ENCODE measurements at regions of chr4 and their contacts with region 1.

Region 1: DNA sequence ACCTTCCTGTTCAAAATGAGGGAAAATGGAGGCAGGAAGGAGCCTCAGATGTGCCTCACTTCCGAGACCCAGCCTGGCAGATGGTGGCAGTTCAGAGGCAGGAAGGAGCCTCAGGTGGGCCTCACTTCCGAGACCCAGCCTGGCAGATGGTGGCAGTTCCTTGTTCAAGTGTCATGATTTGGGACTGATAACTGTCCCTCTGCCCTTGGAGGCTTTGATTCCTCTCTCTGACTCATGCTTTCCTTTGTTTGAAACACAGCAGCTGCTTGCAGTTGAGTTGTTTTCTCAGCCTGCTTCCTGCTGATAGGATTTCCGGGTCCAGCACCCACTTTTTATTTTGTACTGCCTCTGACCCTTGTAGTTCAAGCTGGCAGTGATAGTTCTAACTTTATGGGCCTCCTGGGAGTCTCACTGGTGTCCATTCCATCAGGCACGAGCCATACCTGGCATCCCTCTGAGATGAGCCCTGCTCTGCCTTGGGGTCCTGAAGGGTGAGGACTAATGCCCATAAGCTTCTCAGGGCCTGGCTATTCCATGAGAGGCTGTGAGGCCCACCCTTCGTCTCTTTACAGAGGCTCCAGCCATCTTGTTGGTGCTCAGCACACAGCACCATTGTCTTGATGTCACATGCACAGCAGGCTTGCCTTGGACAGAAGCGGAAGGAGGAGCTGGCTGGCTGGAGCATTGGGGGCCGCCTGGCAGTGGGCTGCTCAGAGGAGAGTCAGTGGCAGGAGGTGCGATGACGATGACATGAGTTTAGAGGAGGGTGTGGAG is 13.0 kb downstream of the RGS12 start:
- DNase-seq: no peak
- H3K4me3 ChIP-seq: no peak overlapping the region
- H3K27ac ChIP-seq: no peak overlapping the region
- H3K4me1 ChIP-seq: peaks cover under 1% of the 10 kb centered on the region
- H3K27me3 ChIP-seq: no peaks in the 10 kb centered on the region
- CTCF ChIP-seq: no peak

Region 2: GRCh38 chr4:3241898-3242524 is 63.8 kb before region 1 on chr4:
- CTCF ChIA-PET with region 1: no interaction called
- dilution Hi-C with region 1: loop called (anchors 5 kb)
- in situ Hi-C with region 1: no loop called
- intact Hi-C with region 1: no loop called
- DNase-seq: no peak
- H3K4me3 ChIP-seq: no peak overlapping the region
- H3K27ac ChIP-seq: no peak overlapping the region
- H3K4me1 ChIP-seq: no peaks in the 10 kb centered on the region
- H3K27me3 ChIP-seq: no peaks in the 10 kb centered on the region
- CTCF ChIP-seq: no peak

Region 3: DNA sequence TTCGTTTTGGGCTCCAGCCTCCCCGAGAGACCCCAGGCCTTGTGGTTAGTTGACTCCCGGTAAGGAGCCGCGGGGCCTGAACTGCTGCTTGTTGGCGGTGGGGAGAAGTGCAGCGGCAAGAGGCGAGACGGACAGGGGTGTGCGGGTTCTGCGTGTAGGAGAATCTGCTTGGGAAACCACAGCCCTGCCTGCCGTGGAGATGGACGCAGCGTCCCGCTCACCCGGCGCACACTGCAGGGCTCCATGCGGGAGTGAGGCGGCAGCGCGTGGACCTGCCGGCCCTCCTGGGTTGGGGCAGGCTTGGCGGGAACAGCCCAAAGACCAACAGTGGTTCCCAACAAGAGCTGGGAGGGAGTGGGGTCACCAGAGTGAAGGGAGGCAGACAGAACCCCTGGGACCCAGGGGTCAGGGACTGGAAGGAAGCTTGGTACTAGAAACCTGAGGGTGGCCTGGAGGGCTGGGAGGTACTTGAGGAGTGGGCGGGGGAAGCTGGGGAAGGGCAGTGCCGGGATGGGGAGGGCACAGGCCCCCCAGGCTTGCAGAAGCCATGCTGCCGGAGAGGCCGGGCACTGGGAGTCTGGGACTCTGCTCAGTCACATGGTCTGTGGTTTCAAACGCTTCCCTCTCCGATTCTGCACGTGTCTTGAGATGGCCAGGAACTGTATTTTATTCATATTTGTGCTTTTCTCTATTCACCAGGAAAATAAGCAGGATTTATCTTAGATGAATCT is 57.8 kb after region 1 on chr4:
- CTCF ChIA-PET with region 1: no interaction called
- dilution Hi-C with region 1: loop called (anchors 5 kb)
- in situ Hi-C with region 1: no loop called
- intact Hi-C with region 1: no loop called
- DNase-seq: no peak
- H3K4me3 ChIP-seq: no peak overlapping the region
- H3K27ac ChIP-seq: no peak overlapping the region
- H3K4me1 ChIP-seq: no peaks in the 10 kb centered on the region
- H3K27me3 ChIP-seq: no peaks in the 10 kb centered on the region
- CTCF ChIP-seq: no peak

Region 4: GRCh38 chr4:3388471-3389232 is 82.9 kb after region 1 on chr4:
- CTCF ChIA-PET with region 1: no interaction called
- dilution Hi-C with region 1: no loop called
- in situ Hi-C with region 1: no loop called
- intact Hi-C with region 1: no loop called
- DNase-seq: peak; percentile 84
- H3K4me3 ChIP-seq: peak overlapping the region; percentile 73 to 85 (median 81)
- H3K27ac ChIP-seq: peak overlapping the region; percentile 83
- H3K4me1 ChIP-seq: peaks cover 33% of the 10 kb centered on the region
- H3K27me3 ChIP-seq: no peaks in the 10 kb centered on the region
- CTCF ChIP-seq: no peak